Aorta (tissue), 5 donors: ENCODE measurements at regions of chr19 and their contacts with region 1.

Region 1: DNA sequence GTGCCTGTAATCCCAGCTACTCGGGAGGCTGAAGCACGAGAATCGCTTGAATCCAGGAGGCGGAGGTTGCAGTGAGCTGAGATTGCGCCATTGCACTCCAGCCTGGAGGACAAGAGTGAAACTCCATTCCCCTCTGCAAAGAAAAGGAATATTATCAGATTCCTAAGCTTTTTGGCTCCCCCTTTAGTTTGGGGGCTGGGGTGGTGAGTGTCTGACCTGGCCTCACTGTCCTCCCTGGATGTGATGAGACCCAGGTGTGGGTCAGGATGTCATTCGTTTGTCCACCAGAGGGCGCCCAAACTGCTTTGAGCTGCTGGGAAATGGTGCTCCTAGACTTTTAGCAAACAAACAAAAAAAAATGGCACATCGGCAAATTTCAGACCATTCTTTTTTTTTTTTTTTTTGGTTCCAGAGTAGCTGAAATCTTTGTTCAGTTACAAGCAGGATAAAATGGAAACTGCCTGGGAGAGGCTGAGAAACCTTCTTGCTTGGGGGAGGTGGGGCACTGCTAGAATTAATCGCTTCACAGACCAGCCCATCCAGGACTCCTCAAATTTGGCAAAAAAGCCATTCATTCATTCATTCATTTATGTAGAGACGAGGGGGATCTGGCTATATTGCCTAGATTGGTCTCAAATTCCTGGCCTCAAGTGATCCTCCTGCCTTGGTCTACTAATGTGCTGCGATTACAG is 29.4 kb downstream of the SPC24 start:
- DNase-seq: peak; percentile 87 to 91
- ATAC-seq: peak; percentile 87
- H3K4me3 ChIP-seq: no peak overlapping the region
- H3K27ac ChIP-seq: no peak overlapping the region
- H3K4me1 ChIP-seq: no peaks in the 10 kb centered on the region
- H3K27me3 ChIP-seq: no peaks in the 10 kb centered on the region

Region 2: DNA sequence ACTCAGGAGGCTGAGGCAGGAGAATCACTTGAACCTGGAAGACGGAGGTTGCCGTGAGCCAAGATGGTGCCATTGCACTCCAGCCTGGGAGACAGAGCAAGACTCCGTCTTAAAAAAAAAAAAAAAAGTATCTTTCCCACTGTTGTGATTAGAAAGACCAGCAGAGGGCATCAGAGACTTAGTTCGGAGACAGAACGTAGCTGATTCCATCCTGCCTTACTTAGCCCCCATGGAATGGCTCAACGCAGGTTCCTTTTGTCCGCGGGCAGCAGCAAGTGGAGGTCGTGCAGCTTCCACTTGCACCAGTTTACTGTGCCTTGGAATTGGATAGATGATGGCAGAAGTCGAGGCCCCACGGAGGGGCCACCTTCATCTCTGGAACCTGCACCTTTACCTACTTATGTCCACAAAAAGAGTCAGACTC is 189.5 kb before region 1 on chr19:
- intact Hi-C with region 1: loop called in 1 of 2 experiments (anchors 10 kb)
- DNase-seq: no peak
- ATAC-seq: peak; percentile 73
- H3K4me3 ChIP-seq: no peak overlapping the region
- H3K27ac ChIP-seq: no peak overlapping the region
- H3K4me1 ChIP-seq: no peaks in the 10 kb centered on the region
- H3K27me3 ChIP-seq: no peaks in the 10 kb centered on the region

Region 3: GRCh38 chr19:11111117-11111774 is 14.9 kb before region 1 on chr19:
- intact Hi-C with region 1: no loop called
- DNase-seq: no peak
- ATAC-seq: no peak
- H3K4me3 ChIP-seq: no peak overlapping the region
- H3K27ac ChIP-seq: no peak overlapping the region
- H3K4me1 ChIP-seq: no peaks in the 10 kb centered on the region
- H3K27me3 ChIP-seq: no peaks in the 10 kb centered on the region

Region 4: DNA sequence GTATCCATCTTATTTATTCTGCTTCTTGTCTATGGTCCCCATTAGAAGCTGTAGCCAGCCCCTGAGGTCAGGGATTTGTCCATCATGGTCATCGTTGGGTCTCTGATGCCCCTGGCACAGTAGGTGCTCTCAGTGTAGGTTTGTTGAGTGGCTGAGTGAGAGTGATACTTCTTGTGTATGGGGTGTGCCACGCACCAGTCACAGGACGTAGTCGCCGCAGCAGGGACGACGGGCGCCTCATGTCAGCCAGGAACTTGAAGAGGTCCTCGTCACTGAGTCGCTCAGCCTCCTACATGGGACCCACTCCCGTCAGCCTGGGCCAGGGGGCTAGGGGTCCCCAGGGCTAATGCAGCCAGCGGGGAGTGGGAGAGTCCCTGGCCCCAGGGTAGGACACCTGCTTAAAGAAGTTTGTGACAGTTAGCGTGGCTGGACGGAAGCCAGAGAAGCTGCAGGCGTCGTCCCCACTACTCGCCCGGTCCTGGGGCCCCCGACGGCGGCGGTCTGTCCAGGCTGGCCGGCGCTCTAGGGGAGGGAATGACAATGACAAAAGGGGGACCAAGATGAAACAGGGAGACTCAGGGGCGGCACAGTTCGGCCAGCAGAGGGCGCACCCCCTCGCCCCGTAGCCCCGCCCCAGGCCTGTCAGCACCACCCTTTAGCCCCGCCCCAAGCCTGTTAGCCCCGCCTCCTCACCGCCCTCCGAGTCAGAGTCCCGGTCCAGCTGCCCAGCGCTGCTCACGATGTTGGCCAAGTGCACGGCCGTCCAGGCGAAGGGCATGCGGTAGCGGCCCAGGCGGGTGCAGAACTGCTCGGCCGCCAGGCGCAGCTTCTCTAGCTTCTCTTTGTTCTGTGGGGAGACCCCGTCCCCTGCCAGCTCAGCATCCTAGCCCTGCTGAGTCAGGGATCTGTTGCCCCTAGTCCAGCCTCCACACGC is 117.0 kb after region 1 on chr19:
- intact Hi-C with region 1: no loop called
- DNase-seq: peak; percentile 96 to 98
- ATAC-seq: peak; percentile 94
- H3K4me3 ChIP-seq: no peak overlapping the region
- H3K27ac ChIP-seq: no peak overlapping the region
- H3K4me1 ChIP-seq: no peaks in the 10 kb centered on the region
- H3K27me3 ChIP-seq: no peaks in the 10 kb centered on the region